IMR-90 (cell line): ENCODE measurements at regions of chr3 and their contacts with region 1.

Region 1: DNA sequence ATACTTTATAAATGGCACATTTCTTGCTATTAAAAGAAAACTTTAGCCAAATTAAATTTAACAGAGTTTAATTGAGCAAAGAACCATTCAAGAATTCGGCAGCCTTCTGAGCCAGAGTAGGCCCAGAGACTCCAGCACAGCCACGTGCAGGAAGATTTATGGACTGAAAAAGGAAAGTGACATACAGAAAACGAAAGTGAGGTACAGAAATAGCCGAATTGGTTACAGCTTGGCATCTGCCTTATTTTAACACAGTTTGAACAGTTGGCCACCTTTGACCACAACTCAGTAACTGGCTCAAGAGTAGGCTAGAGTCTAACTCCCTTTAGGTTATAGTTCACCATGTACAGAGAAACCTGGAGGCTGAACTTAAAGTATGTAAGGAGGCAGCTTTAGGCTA is 17.6 kb downstream of the CFAP44 start:
- DNase-seq: no peak
- ATAC-seq: no peak
- H3K4me3 ChIP-seq: no peak overlapping the region
- H3K27ac ChIP-seq: no peak overlapping the region
- H3K4me1 ChIP-seq: no peaks in the 10 kb centered on the region
- H3K27me3 ChIP-seq: no peaks in the 10 kb centered on the region
- CTCF ChIP-seq: no peak
- POLR2A ChIP-seq: no peak
- RAD21 ChIP-seq: no peak

Region 2: DNA sequence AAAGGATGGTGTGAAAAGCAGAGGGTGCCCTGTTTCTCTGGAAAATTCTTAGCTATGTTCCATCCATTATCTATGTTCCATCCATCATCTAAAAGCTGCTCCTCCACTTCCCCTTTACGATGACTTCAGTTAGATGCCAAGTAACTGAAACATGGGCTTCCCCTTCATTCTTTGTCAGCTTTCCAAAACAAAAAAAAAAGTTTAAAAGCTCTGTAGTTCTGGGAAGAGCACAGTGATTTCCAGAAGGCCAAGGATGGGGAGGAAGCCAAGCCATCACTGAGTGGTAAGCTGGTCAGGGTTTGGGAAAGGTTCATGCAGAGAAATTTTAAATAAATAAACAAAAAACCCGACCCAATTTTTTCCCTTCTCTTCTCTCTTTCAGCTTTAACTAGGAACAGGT is 93.9 kb before region 1 on chr3:
- CTCF ChIA-PET with region 1: no interaction called
- POLR2A ChIA-PET with region 1: no interaction called
- dilution Hi-C with region 1: no loop called
- in situ Hi-C with region 1: no loop called
- intact Hi-C with region 1: loop called (anchors 5 kb)
- DNase-seq: peak; percentile 13
- ATAC-seq: no peak
- H3K4me3 ChIP-seq: no peak overlapping the region
- H3K27ac ChIP-seq: no peak overlapping the region
- H3K4me1 ChIP-seq: no peaks in the 10 kb centered on the region
- H3K27me3 ChIP-seq: no peaks in the 10 kb centered on the region
- CTCF ChIP-seq: no peak
- POLR2A ChIP-seq: no peak
- RAD21 ChIP-seq: no peak

Region 3: GRCh38 chr3:113812854-113813253 is 389.2 kb after region 1 on chr3:
- CTCF ChIA-PET with region 1: no interaction called
- POLR2A ChIA-PET with region 1: no interaction called
- dilution Hi-C with region 1: no loop called
- in situ Hi-C with region 1: no loop called
- intact Hi-C with region 1: no loop called
- DNase-seq: no peak
- ATAC-seq: no peak
- H3K4me3 ChIP-seq: no peak overlapping the region
- H3K27ac ChIP-seq: no peak overlapping the region
- H3K4me1 ChIP-seq: no peaks in the 10 kb centered on the region
- H3K27me3 ChIP-seq: no peaks in the 10 kb centered on the region
- CTCF ChIP-seq: no peak
- POLR2A ChIP-seq: no peak
- RAD21 ChIP-seq: no peak